GM18951 (cell line): ENCODE measurements at regions of chr2 and their contacts with region 1.

Region 1: GRCh38 chr2:187453078-187453641 is 5.1 kb upstream of the CALCRL start:
- POLR2A ChIP-seq: no peak

Region 2: DNA sequence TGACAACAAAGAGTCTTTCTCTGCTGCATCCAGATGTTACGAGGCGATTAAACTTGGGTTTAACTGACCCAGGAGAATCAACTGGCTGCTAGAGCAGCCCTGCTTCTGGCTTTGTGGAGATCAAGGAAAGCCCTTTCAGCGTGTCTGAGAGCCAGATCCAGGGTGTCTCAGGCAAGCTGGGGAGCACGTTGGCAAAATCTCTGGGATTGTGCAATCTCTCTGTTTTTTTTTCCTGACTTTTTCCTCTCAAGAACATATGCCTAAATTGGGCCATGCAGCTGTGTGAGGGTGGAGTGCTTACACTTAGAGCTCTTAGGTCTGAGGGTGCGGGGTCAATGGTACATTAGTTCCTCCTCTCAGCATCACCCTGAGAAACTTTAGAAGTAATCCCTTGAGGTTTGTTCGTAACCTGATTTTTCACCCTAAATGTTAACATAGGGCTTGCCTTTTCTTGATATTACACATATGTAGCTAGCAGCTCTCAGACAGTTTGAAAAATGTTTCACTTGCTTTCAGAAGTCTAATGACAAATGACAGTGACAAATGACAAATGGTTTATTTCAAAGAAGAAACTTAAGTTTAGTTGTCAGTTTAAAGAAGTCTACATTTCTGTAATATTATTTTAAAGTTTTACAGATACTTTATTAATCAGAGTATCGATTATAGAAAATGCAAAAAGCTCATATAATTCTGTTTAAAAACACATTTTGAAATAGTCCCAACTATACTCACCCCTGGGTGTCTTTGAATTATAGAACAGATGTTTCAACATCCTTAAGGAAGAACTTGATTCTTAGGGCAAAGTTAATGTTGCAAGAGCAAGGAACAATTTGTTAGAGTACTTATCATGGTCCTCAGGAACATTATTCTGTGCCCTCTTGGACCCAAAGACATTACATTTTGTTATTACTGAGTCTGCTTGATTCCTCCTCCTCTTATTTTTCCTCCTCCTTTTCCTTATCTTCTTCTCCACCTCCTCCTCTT is 565.8 kb before region 1 on chr2:
- in situ Hi-C with region 1: loop called (anchors 25 kb)
- POLR2A ChIP-seq: no peak

Region 3: GRCh38 chr2:187057466-187057865 is 395.7 kb before region 1 on chr2:
- in situ Hi-C with region 1: no loop called
- POLR2A ChIP-seq: no peak

Region 4: DNA sequence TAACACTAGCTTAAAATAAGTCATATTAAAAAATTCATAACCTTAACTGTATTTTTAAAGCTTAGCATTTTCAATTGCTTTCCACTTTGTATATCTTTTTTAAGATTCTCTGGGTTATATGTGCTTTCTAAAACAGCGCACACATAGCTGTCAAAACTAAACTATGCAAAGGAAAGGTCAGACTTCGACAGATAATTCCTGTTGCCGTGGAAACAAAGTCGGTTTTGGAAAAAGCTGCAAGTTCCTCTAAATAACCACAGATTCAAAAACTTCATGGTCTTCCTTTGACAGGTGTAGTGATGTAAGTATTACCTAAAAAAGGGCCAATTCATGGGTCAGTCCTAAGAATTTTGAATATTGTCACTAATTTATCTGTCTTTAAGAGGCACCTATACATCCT is 350.7 kb after region 1 on chr2:
- in situ Hi-C with region 1: no loop called
- POLR2A ChIP-seq: no peak